Activated CD4-positive, alpha-beta T cell treated with anti-CD3 and anti-CD28 coated beads, Interleukin-2, amount 10 ng/mL, durations not matched to agents 24 days and 14 days (primary cell): ENCODE measurements at regions of chr5 and their contacts with region 1.

Region 1: GRCh38 chr5:334903-335739 is 13.6 kb downstream of the AHRR start:
- DNase-seq: no peak
- H3K4me3 Mint-ChIP-seq: peak overlapping the region; percentile 84
- H3K27ac Mint-ChIP-seq: peak overlapping the region; percentile 91
- H3K4me1 Mint-ChIP-seq: peaks cover 36% of the 10 kb centered on the region
- H3K27me3 Mint-ChIP-seq: no peaks in the 10 kb centered on the region

Region 2: DNA sequence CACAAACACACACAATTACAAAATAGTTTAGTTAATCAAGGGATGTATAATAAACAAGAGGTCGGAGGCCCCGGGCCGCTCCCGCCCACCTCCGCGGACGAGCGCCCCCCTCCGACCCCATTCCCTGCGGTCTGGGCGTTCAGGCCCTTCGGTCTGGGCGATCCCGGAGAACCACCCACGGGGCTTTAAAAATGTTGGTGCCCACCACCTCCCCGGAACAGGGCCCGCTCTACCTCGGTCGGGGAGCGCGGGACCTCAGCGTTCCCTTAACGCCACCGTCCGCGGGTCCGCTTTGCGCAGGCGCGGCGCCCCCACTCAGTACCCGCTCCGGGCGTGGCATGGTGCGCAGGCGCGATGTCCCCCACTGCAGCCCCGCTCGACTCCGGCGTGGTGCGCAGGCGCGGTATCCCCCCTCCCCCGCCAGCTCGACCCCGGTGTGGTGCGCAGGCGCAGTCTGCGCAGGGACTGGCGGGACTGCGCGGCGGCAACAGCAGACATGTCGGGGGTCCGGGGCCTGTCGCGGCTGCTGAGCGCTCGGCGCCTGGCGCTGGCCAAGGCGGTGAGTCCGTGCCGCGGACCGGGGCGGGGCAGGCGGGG is 117.2 kb before region 1 on chr5 and contains the starts of genes CCDC127 and SDHA:
- intact Hi-C with region 1: loop called (anchors 5 kb)
- DNase-seq: peak; percentile 100
- H3K4me3 Mint-ChIP-seq: peak within 1 kb of the TSS; percentile 97
- H3K27ac Mint-ChIP-seq: peak within 1 kb of the TSS; percentile 93
- H3K4me1 Mint-ChIP-seq: peaks cover 47% of the 10 kb centered on the region
- H3K27me3 Mint-ChIP-seq: no peaks in the 10 kb centered on the region
- total RNA-seq, gene CCDC127: 7.1 and 7.7 TPM in 2 replicates
- total RNA-seq, gene SDHA: 147 and 150 TPM in 2 replicates

Region 3: GRCh38 chr5:322281-322941 is 12.7 kb before region 1 on chr5:
- intact Hi-C with region 1: loop called (anchors 1 kb)
- DNase-seq: peak; percentile 75
- H3K4me3 Mint-ChIP-seq: peak overlapping the region; percentile 80
- H3K27ac Mint-ChIP-seq: peak overlapping the region; percentile 34
- H3K4me1 Mint-ChIP-seq: peaks cover 12% of the 10 kb centered on the region
- H3K27me3 Mint-ChIP-seq: peaks cover 11% of the 10 kb centered on the region

Region 4: GRCh38 chr5:345404-346195 is 10.5 kb after region 1 on chr5:
- intact Hi-C with region 1: loop called (anchors 1 kb)
- DNase-seq: peak; percentile 61
- H3K4me3 Mint-ChIP-seq: peak overlapping the region; percentile 70
- H3K27ac Mint-ChIP-seq: peak overlapping the region; percentile 81
- H3K4me1 Mint-ChIP-seq: peaks cover 38% of the 10 kb centered on the region
- H3K27me3 Mint-ChIP-seq: no peaks in the 10 kb centered on the region

Region 5: DNA sequence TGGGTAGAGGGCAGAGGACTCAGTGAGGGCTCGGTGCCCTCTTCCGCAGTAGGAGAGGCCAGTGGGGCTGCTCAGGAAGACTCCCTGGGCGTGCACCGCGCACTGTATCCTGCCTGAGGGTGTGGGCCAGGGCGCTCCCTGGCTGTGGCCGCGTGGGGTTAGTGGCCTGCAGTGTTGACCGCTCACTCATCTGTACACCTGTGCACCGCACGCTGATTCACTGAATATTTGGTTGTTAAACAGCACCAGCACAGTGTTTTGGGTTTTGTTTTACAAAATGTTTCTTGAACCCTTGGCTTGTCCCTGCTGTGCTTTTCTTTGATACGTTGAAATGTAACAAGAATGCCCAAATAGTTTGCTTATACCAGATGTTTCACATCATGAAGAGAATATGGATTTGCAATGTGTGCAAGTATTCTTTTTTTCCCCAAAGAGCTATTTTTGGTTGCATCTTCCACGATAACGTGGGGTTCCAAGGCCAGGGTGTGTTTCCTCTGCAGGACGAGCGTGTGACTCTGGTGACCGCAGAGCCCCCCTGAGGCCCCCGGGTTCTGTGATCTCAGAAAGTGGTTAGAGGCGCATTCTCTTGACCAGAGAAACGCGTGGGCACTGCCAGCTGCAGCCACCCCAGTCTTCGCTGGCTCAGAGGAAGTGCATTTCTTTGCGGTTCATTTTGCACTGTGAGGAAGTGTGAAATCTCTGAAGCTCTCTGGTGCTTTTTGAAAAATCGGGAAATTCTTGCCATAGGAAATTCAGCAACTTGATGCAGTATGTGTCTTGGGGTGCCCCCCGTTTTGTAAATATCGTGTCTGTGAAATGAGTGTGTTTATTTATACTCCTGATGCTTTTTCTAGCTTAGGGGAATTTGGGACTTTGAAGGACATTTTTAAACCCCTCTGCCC is 33.3 kb after region 1 on chr5:
- intact Hi-C with region 1: loop called (anchors 2 kb)
- DNase-seq: peak; percentile 65
- H3K4me3 Mint-ChIP-seq: peak overlapping the region; percentile 54
- H3K27ac Mint-ChIP-seq: peak overlapping the region; percentile 64
- H3K4me1 Mint-ChIP-seq: peaks cover 35% of the 10 kb centered on the region
- H3K27me3 Mint-ChIP-seq: no peaks in the 10 kb centered on the region

Region 6: DNA sequence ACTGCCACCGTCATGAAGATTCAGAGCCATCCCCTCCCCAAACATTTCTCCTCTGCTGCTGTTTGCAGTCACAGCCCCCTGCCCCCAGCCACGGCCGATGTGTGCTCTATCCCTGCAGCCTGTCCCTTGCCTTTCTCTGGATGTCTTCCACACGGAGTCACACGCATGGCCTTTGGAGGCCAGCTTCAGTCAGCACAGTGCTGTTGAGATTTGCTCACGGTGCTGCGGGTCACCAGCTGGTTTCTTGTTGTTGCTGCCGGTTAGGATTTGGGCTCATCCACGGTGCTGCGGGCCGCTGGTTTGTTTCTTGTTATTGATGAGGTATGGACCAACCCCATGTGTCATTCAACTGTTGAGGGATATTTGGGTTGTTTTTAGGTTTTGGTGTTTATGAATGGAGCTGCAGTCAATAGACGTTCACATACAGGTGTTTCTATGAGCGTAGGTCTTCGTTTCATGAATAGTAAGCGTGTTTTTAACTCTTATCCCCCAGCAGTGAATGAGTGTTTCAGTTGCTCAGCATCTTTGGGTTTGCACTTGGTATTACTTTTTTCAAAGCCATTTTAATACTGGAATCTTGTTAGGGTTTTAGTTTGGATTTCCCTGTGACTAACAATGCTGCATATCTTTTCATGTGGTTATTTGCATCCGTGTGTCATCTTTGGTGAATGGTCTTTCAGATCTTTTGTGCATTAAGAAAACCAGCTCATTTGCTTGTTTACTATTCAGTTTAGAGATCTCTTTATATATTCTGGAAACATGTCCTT is 44.0 kb after region 1 on chr5:
- intact Hi-C with region 1: loop called (anchors 1 kb)
- DNase-seq: peak; percentile 69
- H3K4me3 Mint-ChIP-seq: peak overlapping the region; percentile 70
- H3K27ac Mint-ChIP-seq: peak overlapping the region; percentile 93
- H3K4me1 Mint-ChIP-seq: peaks cover 62% of the 10 kb centered on the region
- H3K27me3 Mint-ChIP-seq: no peaks in the 10 kb centered on the region

Region 7: GRCh38 chr5:392431-392988 is 57.4 kb after region 1 on chr5:
- intact Hi-C with region 1: loop called (anchors 1 kb)
- DNase-seq: peak; percentile 96
- H3K4me3 Mint-ChIP-seq: peak overlapping the region; percentile 81
- H3K27ac Mint-ChIP-seq: peak overlapping the region; percentile 98
- H3K4me1 Mint-ChIP-seq: peaks cover 40% of the 10 kb centered on the region
- H3K27me3 Mint-ChIP-seq: no peaks in the 10 kb centered on the region